ENCODE measurements at regions of chr16 and their contacts with region 1.

Region 1: DNA sequence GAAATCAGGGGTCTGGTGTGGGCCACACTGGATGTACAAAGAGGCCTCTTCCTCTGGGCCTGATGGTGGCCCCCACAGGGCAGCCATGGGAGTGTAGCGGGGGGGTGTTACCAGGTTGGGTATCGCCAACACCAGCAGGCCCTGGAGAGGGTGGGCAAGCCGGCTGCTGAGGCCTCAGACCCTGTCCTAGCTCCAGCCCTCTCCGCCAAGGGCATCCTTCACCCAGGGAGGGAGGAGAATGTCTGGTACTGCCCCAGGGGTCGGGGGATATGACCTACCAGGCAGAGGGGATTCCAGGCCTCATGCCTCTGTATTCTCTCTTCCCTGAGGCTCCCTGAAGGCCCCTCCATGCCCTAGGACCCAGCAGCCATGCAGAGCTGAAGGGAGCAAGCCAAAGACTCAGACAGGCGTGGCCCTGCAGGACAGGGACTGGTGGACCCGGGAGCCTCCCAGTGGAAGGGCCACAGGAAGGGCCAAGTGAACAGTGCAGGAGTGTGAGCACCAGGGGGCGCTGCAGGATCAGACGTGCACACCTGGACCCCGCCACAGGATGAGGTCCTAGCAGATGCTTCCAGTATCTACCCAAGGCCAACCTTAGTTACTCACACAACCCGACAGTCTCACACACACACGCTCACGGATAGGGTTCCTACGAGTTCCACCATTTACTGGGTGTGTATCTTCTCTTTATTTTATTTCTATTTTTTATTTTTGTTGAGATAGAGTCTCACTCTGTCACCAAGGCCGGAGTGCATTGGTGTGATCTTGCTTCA is 10.9 kb upstream of the CES4A start:
- DNase-seq: peak; percentile 74 to 97 (median 89)
- ATAC-seq: peak; percentile 92 to 100 (median 98)
- H3K4me3 ChIP-seq: no peak overlapping the region
- H3K27ac ChIP-seq: no peak overlapping the region
- H3K4me1 ChIP-seq: no peaks in the 10 kb centered on the region
- H3K27me3 ChIP-seq: no peaks in the 10 kb centered on the region
- CTCF ChIP-seq: peak; percentile 87 to 96 (median 91)

Region 2: DNA sequence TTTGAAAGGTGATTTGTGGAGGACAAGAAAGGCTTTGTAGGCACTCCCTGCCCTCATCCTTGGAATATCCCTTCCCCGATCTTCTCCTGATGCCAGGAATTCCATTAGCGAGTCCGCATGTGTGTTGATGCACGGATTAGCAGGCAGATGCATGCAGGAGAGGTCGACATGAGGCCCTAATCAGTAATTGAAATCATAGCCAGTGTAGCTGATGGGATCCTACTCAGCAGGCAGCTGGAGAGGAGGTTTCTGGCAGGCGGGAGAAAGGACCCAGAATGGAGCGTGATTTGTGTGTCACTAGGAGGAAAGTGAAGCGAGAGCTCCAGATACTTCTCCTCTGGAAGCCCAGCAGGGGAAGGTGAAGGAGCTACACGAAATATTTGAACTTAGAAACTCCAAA is 1659.4 kb before region 1 on chr16:
- intact Hi-C with region 1: no loop called
- DNase-seq: no peak
- ATAC-seq: no peak
- H3K4me3 ChIP-seq: no peak overlapping the region
- H3K27ac ChIP-seq: no peak overlapping the region
- H3K4me1 ChIP-seq: no peaks in the 10 kb centered on the region
- H3K27me3 ChIP-seq: peaks cover 0 to 8% (median 0%) of the 10 kb centered on the region in 4 donors
- CTCF ChIP-seq: no peak

Region 3: GRCh38 chr16:66918803-66919568 is 58.5 kb before region 1 on chr16 and contains the start of gene CDH16:
- intact Hi-C with region 1: loop called in 1 of 3 experiments (anchors 10 kb)
- DNase-seq: peak in 1 of 6 donors; percentile 55
- ATAC-seq: no peak
- H3K4me3 ChIP-seq: no peak within 1 kb of the TSS
- H3K27ac ChIP-seq: no peak within 1 kb of the TSS
- H3K4me1 ChIP-seq: no peaks in the 10 kb centered on the region
- H3K27me3 ChIP-seq: no peaks in the 10 kb centered on the region
- CTCF ChIP-seq: no peak
- total RNA-seq, gene CDH16: not detected

Region 4: DNA sequence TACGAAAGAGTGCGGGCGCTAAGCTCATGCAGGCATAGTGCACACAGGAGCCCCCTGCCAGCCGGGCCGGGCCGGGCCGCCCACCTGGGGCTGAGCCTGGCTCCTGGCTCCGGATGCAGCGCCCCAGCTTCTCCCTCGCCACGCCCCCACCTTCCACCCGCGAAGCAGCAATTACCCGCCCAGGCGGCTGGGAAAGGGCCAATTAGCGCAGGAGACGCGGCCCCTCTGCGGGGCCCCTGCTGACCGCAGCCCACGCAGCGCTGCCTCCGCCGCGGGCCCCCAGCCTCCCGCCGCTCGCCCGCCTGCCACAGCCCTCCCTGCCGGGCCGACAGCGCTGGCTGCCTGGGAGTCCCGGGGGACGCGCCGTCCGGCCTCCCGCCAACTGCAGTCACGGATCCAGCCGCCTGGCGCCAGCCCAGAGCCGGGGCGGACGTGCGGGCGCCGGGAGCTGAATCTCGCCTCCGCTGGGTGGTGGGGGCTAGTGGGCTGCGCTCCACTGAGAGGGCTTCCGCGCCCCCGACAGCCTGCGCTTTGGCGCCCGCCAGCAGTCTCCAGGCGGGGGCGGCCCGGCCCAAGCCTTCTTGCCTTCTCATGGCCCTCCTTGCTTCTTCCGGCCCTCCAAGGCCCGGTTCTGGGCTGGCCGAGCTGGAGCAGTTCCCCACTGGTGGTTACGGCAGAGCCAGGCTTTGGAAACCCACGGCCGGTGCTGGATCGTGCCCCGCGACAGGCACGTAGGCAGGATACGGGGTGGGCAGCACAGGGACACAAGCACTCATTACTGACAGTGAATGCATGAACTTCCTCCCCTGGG is 36.5 kb after region 1 on chr16:
- intact Hi-C with region 1: no loop called
- DNase-seq: peak; percentile 38 to 87 (median 74)
- ATAC-seq: peak; percentile 54 to 76 (median 71)
- H3K4me3 ChIP-seq: peak overlapping the region; percentile 22 to 59 (median 41)
- H3K27ac ChIP-seq: peak overlapping the region in 1 of 4 donors; percentile 8
- H3K4me1 ChIP-seq: no peaks in the 10 kb centered on the region
- H3K27me3 ChIP-seq: no peaks in the 10 kb centered on the region
- CTCF ChIP-seq: peak in 1 of 4 donors; percentile 8

Region 5: GRCh38 chr16:67150833-67151396 is 173.4 kb after region 1 on chr16 and contains the start of gene B3GNT9:
- intact Hi-C with region 1: loop called in 2 of 3 experiments (anchors 5 to 10 kb)
- DNase-seq: peak in 5 of 6 donors; percentile 58 to 87 (median 72)
- ATAC-seq: peak; percentile 60 to 76 (median 72)
- H3K4me3 ChIP-seq: peak within 1 kb of the TSS; percentile 37 to 61 (median 55)
- H3K27ac ChIP-seq: peak within 1 kb of the TSS; percentile 2 to 48 (median 40)
- H3K4me1 ChIP-seq: peaks cover 0 to 3% (median 0%) of the 10 kb centered on the region in 3 donors
- H3K27me3 ChIP-seq: no peaks in the 10 kb centered on the region
- CTCF ChIP-seq: no peak
- total RNA-seq, gene B3GNT9: 1.8 to 5.1 (median 3.5) TPM

Region 6: GRCh38 chr16:67159593-67160406 is 182.3 kb after region 1 on chr16 and contains the starts of genes FBXL8 and TRADD:
- intact Hi-C with region 1: loop called (anchors 5 to 10 kb)
- DNase-seq: peak; percentile 73 to 92 (median 84)
- ATAC-seq: peak; percentile 82 to 85 (median 83)
- H3K4me3 ChIP-seq: peak within 1 kb of the TSS; percentile 53 to 97 (median 96)
- H3K27ac ChIP-seq: peak within 1 kb of the TSS; percentile 73 to 91 (median 84)
- H3K4me1 ChIP-seq: peaks cover 3 to 23% (median 5%) of the 10 kb centered on the region in 3 donors
- H3K27me3 ChIP-seq: no peaks in the 10 kb centered on the region
- CTCF ChIP-seq: no peak
- total RNA-seq, gene FBXL8: 12.9 to 31.7 (median 24.2) TPM
- total RNA-seq, gene TRADD: 9.4 to 17.4 (median 11.5) TPM